ENCODE measurements at regions of chr2 and their contacts with region 1.

Region 1: GRCh38 chr2:161576421-161576820 is 47.8 kb upstream of the SLC4A10 start:
- DNase-seq: no peak
- ATAC-seq: no peak
- H3K4me3 ChIP-seq: no peak overlapping the region
- H3K27ac ChIP-seq: no peak overlapping the region
- H3K4me1 ChIP-seq: no peaks in the 10 kb centered on the region
- H3K27me3 ChIP-seq: no peaks in the 10 kb centered on the region
- CTCF ChIP-seq: no peak

Region 2: GRCh38 chr2:161303535-161304050 is 272.8 kb before region 1 on chr2:
- intact Hi-C with region 1: no loop called
- DNase-seq: no peak
- ATAC-seq: no peak
- H3K4me3 ChIP-seq: no peak overlapping the region
- H3K27ac ChIP-seq: no peak overlapping the region
- H3K4me1 ChIP-seq: peaks cover 0 to 3% of the 10 kb centered on the region in 2 donors
- H3K27me3 ChIP-seq: no peaks in the 10 kb centered on the region
- CTCF ChIP-seq: no peak

Region 3: DNA sequence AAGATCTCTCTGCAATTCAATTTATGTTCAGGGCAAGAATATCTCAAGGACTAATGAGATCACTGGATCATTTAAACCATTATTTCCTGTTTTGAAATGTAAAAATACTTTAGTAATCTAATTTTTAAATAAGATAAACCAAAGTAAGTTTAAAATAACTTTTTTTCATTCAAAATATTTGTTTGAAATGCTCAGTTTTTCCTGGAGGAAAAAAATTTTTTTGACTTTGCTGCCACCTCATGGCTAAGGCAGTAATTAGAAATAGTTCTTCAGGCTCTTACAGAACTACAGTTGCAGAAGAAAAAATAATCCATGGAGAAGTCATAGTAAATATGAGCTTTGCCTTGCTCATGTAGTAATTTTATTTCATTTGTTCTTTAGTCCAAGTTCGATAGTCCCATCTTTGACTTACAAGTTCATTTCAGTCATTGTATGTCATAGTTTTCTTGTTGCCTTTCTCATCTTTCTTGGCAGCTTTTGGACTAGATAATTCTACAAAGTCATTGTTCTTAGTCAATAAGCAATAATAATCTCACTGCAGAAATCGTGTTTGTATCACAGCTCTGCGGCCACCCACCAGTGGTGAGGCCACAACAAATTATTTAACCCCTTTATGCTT is 370.2 kb after region 1 on chr2:
- intact Hi-C with region 1: loop called in 1 of 2 experiments (anchors 10 kb)
- DNase-seq: peak in 1 of 4 donors; percentile 40
- ATAC-seq: peak; percentile 40
- H3K4me3 ChIP-seq: no peak overlapping the region
- H3K27ac ChIP-seq: no peak overlapping the region
- H3K4me1 ChIP-seq: no peaks in the 10 kb centered on the region
- H3K27me3 ChIP-seq: peaks cover 0 to 7% of the 10 kb centered on the region in 2 donors
- CTCF ChIP-seq: peak; percentile 38 to 48